Transverse colon (tissue), 4 donors: ENCODE measurements at regions of chr12 and their contacts with region 1.

Region 1: GRCh38 chr12:53675651-53676453 is at the start of gene ATP5MC2:
- DNase-seq: peak; percentile 98
- H3K4me3 ChIP-seq: peak within 1 kb of the TSS; percentile 59 to 83 (median 67)
- H3K27ac ChIP-seq: peak within 1 kb of the TSS; percentile 85 to 94 (median 90)
- H3K4me1 ChIP-seq: peaks cover 10 to 33% (median 18%) of the 10 kb centered on the region in 4 donors
- H3K27me3 ChIP-seq: peaks cover 6% of the 10 kb centered on the region
- CTCF ChIP-seq: peak; percentile 90 to 100 (median 99)
- EP300 ChIP-seq: no peak
- POLR2A ChIP-seq: peak; percentile 78
- total RNA-seq, gene ATP5MC2: 248 to 394 (median 337) TPM

Region 2: GRCh38 chr12:53543539-53543938 is 132.3 kb before region 1 on chr12:
- in situ Hi-C with region 1: loop called (anchors 5 to 10 kb)
- intact Hi-C with region 1: loop called (anchors 5 kb)
- DNase-seq: peak; percentile 51
- H3K4me3 ChIP-seq: no peak overlapping the region
- H3K27ac ChIP-seq: peak overlapping the region; percentile 20 to 68 (median 55)
- H3K4me1 ChIP-seq: peaks cover 6 to 16% (median 9%) of the 10 kb centered on the region in 4 donors
- H3K27me3 ChIP-seq: no peaks in the 10 kb centered on the region
- CTCF ChIP-seq: peak; percentile 69 to 95 (median 81)
- EP300 ChIP-seq: no peak
- POLR2A ChIP-seq: no peak

Region 3: DNA sequence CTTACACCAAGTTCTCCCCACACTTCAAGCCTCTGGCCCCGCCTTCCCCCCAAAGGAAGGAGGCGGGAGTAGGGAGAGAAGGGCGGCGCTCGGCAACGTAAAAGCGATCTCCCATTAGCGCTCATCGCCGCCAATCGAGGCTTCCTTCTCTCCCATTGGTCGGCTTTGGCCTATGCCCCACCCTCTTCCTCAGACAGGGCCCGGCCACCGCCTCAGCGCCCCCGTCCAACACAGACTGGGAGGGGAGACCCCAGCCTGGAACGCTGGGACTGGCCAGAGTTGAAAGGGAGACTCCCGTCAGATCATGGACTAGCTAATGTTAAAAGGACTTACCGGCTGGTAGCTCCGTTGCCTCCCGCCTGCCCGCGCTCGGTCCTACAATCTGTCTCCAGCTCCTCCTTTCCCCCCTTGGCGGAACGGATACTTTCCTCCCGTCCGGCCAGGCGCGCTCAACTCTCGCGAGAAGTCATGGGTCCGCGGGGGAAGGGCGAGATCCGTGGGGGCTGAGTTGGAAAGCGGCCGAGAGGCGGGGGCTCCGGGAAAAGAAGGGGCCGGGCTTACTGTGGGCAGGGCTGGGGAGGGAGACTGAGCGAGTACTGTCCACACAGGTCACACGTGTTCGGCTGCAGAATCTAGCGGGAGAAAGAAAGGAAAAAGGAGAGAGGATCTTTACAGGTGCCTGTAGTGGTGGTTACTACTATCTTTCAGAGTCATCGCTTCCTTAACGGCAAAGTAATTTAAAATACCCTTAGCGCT is 49.7 kb before region 1 on chr12 and contains the start of gene ATF7:
- in situ Hi-C with region 1: loop called in 1 of 4 experiments (anchors 10 kb)
- intact Hi-C with region 1: loop called (anchors 10 kb)
- DNase-seq: peak; percentile 99
- H3K4me3 ChIP-seq: peak within 1 kb of the TSS; percentile 60 to 71 (median 67)
- H3K27ac ChIP-seq: peak within 1 kb of the TSS; percentile 86 to 93 (median 89)
- H3K4me1 ChIP-seq: peaks cover 3 to 49% (median 38%) of the 10 kb centered on the region in 4 donors
- H3K27me3 ChIP-seq: no peaks in the 10 kb centered on the region
- CTCF ChIP-seq: no peak
- EP300 ChIP-seq: no peak
- POLR2A ChIP-seq: peak; percentile 60
- total RNA-seq, gene ATF7: 14.2 to 29.7 (median 26.8) TPM